B cell (primary cell): ENCODE measurements at regions of chr1 and their contacts with region 1.

Region 1: DNA sequence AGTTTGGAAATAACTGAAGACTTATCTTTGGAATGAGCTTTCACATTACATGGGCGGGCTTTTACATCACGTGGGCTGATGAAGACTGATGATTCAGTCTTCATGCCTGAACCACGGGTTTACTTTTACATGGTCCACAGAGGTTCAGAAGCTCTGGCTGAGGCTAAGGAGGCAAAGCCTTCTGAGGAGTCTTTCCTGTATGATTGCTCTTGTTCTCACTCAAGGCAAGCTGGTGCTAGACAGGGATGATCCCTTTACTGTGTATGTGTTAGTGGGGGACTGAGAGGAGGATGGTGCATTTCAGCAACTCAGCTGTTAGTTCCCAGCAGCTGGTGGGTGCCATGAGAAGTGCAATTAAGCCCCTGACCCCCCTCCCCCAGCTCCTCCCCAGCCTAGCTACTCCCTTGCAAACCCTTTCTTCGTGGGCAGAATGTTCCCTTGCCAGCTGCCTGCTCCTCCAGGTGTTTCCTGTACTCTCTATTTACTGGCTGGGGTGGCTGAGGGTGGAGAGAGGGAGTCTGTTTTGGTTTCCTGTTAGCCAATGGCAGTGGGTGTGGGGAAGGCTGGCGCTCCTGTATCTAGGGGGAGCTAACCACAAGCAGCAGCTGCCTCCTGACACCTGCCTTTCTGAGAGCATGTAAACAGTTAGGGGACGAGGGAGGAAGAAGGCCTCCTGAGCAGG is 15.4 kb downstream of the BTG2 start:
- DNase-seq: peak; percentile 90
- ATAC-seq: peak; percentile 69
- H3K4me3 ChIP-seq: peak overlapping the region in 3 of 5 experiments; percentile 3 to 46 (median 25)
- H3K4me3 Mint-ChIP-seq: peak overlapping the region; percentile 79
- H3K27ac ChIP-seq: peak overlapping the region; percentile 96 to 97
- H3K27ac Mint-ChIP-seq: peak overlapping the region; percentile 98
- H3K4me1 ChIP-seq: peaks cover 77 to 92% of the 10 kb centered on the region in 2 donors
- H3K4me1 Mint-ChIP-seq: peaks cover 90% of the 10 kb centered on the region
- H3K27me3 ChIP-seq: no peaks in the 10 kb centered on the region
- H3K27me3 Mint-ChIP-seq: no peaks in the 10 kb centered on the region
- CTCF ChIP-seq: no peak

Region 2: DNA sequence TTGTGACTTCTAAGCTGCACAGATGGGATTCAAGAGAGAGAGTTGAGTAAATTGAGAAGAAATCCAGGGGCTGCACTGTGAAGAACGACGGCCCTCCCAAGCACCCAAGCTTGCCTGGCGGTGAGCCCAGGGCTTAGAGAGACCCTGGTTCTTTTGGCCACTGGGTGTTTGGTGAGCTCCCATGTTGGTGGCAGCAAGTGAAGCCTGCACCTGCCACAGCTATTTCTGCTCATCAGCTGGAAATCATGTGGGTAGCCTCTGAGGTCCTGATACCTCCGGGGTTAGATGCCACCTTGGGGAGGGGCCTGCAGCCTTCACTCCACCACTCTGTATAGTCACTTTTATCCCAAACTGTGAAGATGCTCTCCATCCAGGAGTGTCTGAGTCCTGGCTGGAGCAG is 21.6 kb before region 1 on chr1:
- CTCF ChIA-PET with region 1: interaction called, 1,776 read pairs
- POLR2A ChIA-PET with region 1: interaction called, 68 read pairs
- intact Hi-C with region 1: no loop called
- DNase-seq: peak; percentile 79
- ATAC-seq: peak; percentile 70
- H3K4me3 ChIP-seq: peak overlapping the region in 3 of 5 experiments; percentile 4 to 26 (median 5)
- H3K4me3 Mint-ChIP-seq: peak overlapping the region; percentile 68
- H3K27ac ChIP-seq: peak overlapping the region; percentile 76 to 87
- H3K27ac Mint-ChIP-seq: peak overlapping the region; percentile 93
- H3K4me1 ChIP-seq: peaks cover 87 to 100% of the 10 kb centered on the region in 2 donors
- H3K4me1 Mint-ChIP-seq: peaks cover 91% of the 10 kb centered on the region
- H3K27me3 ChIP-seq: no peaks in the 10 kb centered on the region
- H3K27me3 Mint-ChIP-seq: no peaks in the 10 kb centered on the region
- CTCF ChIP-seq: no peak

Region 3: GRCh38 chr1:203304919-203305808 is 15.6 kb before region 1 on chr1 and contains the start of gene BTG2:
- CTCF ChIA-PET with region 1: interaction called, 361 read pairs
- POLR2A ChIA-PET with region 1: interaction called, 687 read pairs
- intact Hi-C with region 1: loop called (anchors 1 kb)
- DNase-seq: peak; percentile 96
- ATAC-seq: peak; percentile 80
- H3K4me3 ChIP-seq: peak within 1 kb of the TSS; percentile 96 to 99 (median 99)
- H3K4me3 Mint-ChIP-seq: peak within 1 kb of the TSS; percentile 99
- H3K27ac ChIP-seq: peak within 1 kb of the TSS; percentile 100
- H3K27ac Mint-ChIP-seq: peak within 1 kb of the TSS; percentile 99
- H3K4me1 ChIP-seq: peaks cover 65 to 78% of the 10 kb centered on the region in 2 donors
- H3K4me1 Mint-ChIP-seq: peaks cover 70% of the 10 kb centered on the region
- H3K27me3 ChIP-seq: no peaks in the 10 kb centered on the region
- H3K27me3 Mint-ChIP-seq: no peaks in the 10 kb centered on the region
- CTCF ChIP-seq: no peak
- total RNA-seq, gene BTG2: 505 and 508 TPM in 2 replicates